PC-9 (cell line): ENCODE measurements at regions of chr1 and their contacts with region 1.

Region 1: DNA sequence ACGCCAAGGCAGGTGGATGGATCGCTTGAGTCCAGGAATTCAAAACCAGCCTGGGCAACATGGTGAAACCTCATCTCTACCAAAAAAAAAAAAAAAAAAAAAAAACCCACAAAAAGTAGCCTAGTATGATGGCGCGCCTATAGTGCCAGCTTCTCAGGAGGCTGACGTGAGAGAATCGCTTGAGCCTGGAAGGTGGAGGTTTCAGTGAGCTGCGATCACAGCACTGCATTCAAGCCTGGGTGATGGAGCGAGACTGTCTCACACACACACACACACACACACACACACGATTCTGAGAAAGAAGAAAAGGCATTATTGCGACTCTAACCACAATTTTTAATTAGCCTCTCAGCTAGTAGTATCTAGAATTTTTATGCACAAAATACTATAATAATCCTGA is 86.5 kb downstream of the RASAL2 start:
- DNase-seq: no peak
- H3K4me3 ChIP-seq: no peak overlapping the region
- H3K27ac ChIP-seq: no peak overlapping the region
- H3K4me1 ChIP-seq: no peaks in the 10 kb centered on the region
- H3K27me3 ChIP-seq: no peaks in the 10 kb centered on the region
- CTCF ChIP-seq: no peak

Region 2: GRCh38 chr1:177629526-177629925 is 550.9 kb before region 1 on chr1:
- CTCF ChIA-PET with region 1: no interaction called
- POLR2A ChIA-PET with region 1: no interaction called
- intact Hi-C with region 1: no loop called
- DNase-seq: no peak
- H3K4me3 ChIP-seq: no peak overlapping the region
- H3K27ac ChIP-seq: no peak overlapping the region
- H3K4me1 ChIP-seq: no peaks in the 10 kb centered on the region
- H3K27me3 ChIP-seq: peaks cover 5% of the 10 kb centered on the region; the same call in 1 of the 2 replicates
- CTCF ChIP-seq: no peak

Region 3: GRCh38 chr1:178196631-178197030 is 16.2 kb after region 1 on chr1:
- CTCF ChIA-PET with region 1: interaction called, 11 read pairs
- POLR2A ChIA-PET with region 1: no interaction called
- intact Hi-C with region 1: no loop called
- DNase-seq: peak in 1 of 2 experiments; percentile 50
- H3K4me3 ChIP-seq: no peak overlapping the region
- H3K27ac ChIP-seq: no peak overlapping the region
- H3K4me1 ChIP-seq: peaks cover 8% of the 10 kb centered on the region; the same call in 1 of the 2 replicates
- H3K27me3 ChIP-seq: no peaks in the 10 kb centered on the region
- CTCF ChIP-seq: no peak

Region 4: GRCh38 chr1:178581351-178582303 is 401.2 kb after region 1 on chr1:
- CTCF ChIA-PET with region 1: no interaction called
- POLR2A ChIA-PET with region 1: no interaction called
- intact Hi-C with region 1: no loop called
- DNase-seq: no peak
- H3K4me3 ChIP-seq: no peak overlapping the region
- H3K27ac ChIP-seq: no peak overlapping the region
- H3K4me1 ChIP-seq: no peaks in the 10 kb centered on the region
- H3K27me3 ChIP-seq: no peaks in the 10 kb centered on the region
- CTCF ChIP-seq: no peak